Naive thymus-derived CD4-positive, alpha-beta T cell (primary cell): ENCODE measurements at regions of chr15 and their contacts with region 1.

Region 1: DNA sequence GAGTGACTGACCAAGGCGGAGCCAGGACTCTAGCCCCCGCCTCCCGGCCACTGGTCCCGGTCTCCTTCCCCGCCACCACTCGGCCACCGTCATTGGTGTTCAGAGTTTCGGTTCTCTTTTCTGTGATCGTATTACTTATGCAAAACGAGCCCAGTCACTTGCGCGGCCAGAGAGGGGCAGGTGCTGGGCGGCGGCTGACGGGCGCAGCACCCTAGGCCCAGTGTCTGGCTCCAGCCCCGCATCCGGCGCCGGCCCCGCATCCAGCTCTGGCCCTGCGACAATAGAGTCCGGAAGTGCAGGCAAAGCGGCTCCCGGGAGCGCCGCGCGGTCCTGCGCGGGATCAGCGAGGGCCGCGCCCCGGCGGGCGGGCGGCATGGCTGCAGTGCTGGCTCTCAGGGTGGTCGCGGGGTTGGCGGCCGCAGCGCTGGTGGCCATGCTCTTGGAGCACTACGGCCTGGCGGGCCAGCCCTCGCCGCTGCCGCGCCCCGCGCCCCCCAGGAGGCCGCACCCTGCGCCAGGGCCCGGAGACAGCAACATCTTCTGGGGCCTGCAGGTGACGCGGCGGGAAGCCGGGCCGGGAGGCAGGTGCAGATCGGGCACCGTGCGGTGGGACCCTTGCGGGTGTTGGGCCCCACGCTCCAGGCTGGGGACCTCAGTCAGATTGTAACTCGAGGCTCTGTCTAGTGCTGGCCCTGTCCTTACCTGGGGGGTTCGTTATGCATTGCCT is at the start of gene TMEM62:
- DNase-seq: peak; percentile 33 to 67 (median 46)
- ATAC-seq: peak; percentile 88
- H3K4me3 ChIP-seq: peak within 1 kb of the TSS; percentile 65
- H3K4me3 Mint-ChIP-seq: peak within 1 kb of the TSS; percentile 86 to 97 (median 95)
- H3K27ac ChIP-seq: peak within 1 kb of the TSS; percentile 72
- H3K27ac Mint-ChIP-seq: peak within 1 kb of the TSS; percentile 77 to 93 (median 89)
- H3K4me1 ChIP-seq: peaks cover 6 to 11% of the 10 kb centered on the region in 2 donors
- H3K4me1 Mint-ChIP-seq: peaks cover 13 to 29% (median 22%) of the 10 kb centered on the region in 7 donors
- H3K27me3 ChIP-seq: no peaks in the 10 kb centered on the region
- H3K27me3 Mint-ChIP-seq: peaks cover 0 to 15% (median 7%) of the 10 kb centered on the region in 5 donors
- total RNA-seq, gene TMEM62: 12.0 to 21.5 (median 17.7) TPM

Region 2: DNA sequence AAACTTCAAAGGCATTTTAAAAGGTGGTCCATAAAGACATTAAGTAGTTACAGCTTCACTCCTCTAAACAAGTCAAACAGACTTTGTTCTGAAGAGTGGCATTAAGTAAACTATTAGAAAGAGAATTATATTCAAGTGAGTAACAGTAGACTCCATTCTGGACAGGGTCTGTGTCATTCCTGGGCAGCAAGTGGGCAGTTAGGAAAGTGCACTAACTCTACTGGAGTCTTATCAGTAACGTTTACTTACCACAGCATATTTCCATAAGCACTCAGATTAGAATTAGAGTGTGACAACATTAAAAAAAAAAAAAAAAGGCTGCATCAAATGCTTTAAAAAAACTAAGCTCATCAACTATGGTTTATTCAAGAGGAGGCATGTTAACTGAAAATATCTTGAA is 38.4 kb before region 1 on chr15:
- CTCF ChIA-PET with region 1: no interaction called
- POLR2A ChIA-PET with region 1: no interaction called
- intact Hi-C with region 1: loop called in 1 of 2 experiments (anchors 5 kb)
- DNase-seq: no peak
- ATAC-seq: no peak
- H3K4me3 ChIP-seq: no peak overlapping the region
- H3K4me3 Mint-ChIP-seq: no peak overlapping the region
- H3K27ac ChIP-seq: no peak overlapping the region
- H3K27ac Mint-ChIP-seq: peak overlapping the region in 1 of 9 donors; percentile 49
- H3K4me1 ChIP-seq: no peaks in the 10 kb centered on the region
- H3K4me1 Mint-ChIP-seq: peaks cover 24 to 80% (median 66%) of the 10 kb centered on the region in 7 donors
- H3K27me3 ChIP-seq: no peaks in the 10 kb centered on the region
- H3K27me3 Mint-ChIP-seq: no peaks in the 10 kb centered on the region

Region 3: DNA sequence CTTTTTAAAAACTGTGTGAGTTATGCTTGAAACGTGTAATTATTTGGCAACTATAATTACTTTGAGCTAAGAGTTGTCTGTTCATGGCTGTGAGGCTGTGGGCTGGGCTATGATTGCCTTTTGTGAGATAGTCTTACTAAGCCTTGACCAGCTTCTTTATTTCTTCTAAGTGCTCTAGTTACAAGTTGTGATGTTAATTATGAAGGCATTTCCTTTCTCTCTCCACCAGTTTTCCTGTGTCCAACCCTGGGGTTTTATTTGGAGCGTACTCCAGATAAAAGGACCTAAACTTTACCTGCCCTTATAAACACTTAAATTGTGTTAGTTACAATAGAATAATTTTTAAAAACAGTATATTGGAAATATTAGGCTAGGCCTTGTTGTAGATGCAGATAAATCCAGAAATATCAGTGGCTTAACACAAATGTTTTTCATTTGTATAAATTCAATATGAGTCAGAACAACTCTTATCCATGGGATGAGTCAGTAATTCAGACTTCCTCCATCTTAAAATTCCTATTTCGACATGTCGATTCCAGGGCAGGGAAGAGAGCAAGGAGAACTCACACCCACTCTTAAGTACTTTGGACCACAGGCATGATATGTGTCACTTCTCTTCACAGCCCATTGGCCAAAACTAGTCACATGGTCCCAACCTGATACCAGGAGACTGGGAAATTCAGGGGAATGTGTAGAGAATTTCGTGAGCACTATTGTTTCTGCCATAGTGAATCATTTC is 16.8 kb after region 1 on chr15:
- CTCF ChIA-PET with region 1: no interaction called
- POLR2A ChIA-PET with region 1: no interaction called
- intact Hi-C with region 1: loop called (anchors 1 to 2 kb)
- DNase-seq: no peak
- ATAC-seq: no peak
- H3K4me3 ChIP-seq: no peak overlapping the region
- H3K4me3 Mint-ChIP-seq: no peak overlapping the region
- H3K27ac ChIP-seq: no peak overlapping the region
- H3K27ac Mint-ChIP-seq: no peak overlapping the region
- H3K4me1 ChIP-seq: peaks cover 4 to 5% of the 10 kb centered on the region in 2 donors
- H3K4me1 Mint-ChIP-seq: peaks cover 5 to 21% (median 14%) of the 10 kb centered on the region in 7 donors
- H3K27me3 ChIP-seq: no peaks in the 10 kb centered on the region
- H3K27me3 Mint-ChIP-seq: no peaks in the 10 kb centered on the region

Region 4: GRCh38 chr15:43225201-43225949 is 91.8 kb after region 1 on chr15:
- CTCF ChIA-PET with region 1: no interaction called
- POLR2A ChIA-PET with region 1: no interaction called
- intact Hi-C with region 1: no loop called
- DNase-seq: peak in 7 of 9 donors; percentile 29 to 69 (median 56)
- ATAC-seq: peak; percentile 85
- H3K4me3 ChIP-seq: no peak overlapping the region
- H3K4me3 Mint-ChIP-seq: peak overlapping the region in 4 of 10 donors; percentile 1 to 62 (median 28)
- H3K27ac ChIP-seq: no peak overlapping the region
- H3K27ac Mint-ChIP-seq: no peak overlapping the region
- H3K4me1 ChIP-seq: no peaks in the 10 kb centered on the region
- H3K4me1 Mint-ChIP-seq: peaks cover 1 to 9% (median 7%) of the 10 kb centered on the region in 7 donors
- H3K27me3 ChIP-seq: no peaks in the 10 kb centered on the region
- H3K27me3 Mint-ChIP-seq: peaks cover 5 to 24% (median 11%) of the 10 kb centered on the region in 5 donors